K562 (cell line): ENCODE measurements at regions of chr6 and their contacts with region 1.

Region 1: DNA sequence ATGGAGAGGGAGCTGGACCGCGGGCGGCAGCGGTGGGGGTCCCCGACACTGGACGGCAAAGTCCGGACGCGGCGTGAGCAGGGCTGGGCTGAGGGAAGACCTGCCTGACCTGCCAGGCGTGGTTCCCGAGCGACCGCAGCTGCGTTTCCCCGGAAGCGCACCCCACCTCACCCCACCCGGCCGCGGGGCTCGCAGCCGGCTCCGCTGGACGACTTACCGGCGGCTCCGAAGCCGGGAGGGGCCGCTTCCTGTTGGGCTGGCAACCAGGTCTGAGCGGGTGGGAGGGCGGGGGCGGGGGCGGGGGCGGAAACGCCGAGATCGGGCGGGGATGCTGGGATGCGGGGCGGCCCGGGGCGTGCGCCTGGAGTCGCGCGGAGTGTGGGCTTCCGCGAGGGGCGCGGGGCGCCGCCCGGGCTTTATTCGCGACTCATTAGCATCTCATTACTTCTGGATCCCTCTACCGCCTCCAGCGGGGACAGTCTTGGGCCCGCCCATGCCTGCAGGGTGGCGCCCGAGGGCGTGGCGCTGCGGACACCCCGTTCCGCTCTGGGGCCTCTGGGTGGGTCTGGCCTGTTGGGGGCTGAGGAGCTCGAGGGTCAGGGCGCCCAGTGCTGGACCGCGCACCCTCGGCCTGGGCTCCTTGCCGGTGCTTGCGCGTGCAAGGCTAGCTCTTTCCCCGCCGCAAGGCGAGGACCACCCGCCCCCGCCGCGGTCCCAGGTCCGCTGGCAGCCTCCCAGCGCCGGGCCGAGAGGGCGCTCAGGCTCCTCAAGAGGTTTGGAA is at the start of gene MICAL1:
- DNase-seq: peak; percentile 87 to 89 (median 88)
- ATAC-seq: peak; percentile 96
- H3K4me3 ChIP-seq: peak within 1 kb of the TSS; percentile 63
- H3K27ac ChIP-seq: peak within 1 kb of the TSS; percentile 39
- H3K4me1 ChIP-seq: peaks cover 5 to 32% of the 10 kb centered on the region in 2 experiments; a peak in 4 of 5 replicates
- H3K27me3 ChIP-seq: no peaks in the 10 kb centered on the region
- CTCF ChIP-seq: peak; percentile 41 to 70 (median 42); a peak in 5 of 6 replicates
- EP300 ChIP-seq: no peak; the same call in 1 of the 2 replicates
- POLR2A ChIP-seq: peak; percentile 55; the same call in 1 of the 2 replicates
- RAD21 ChIP-seq: peak in 1 of 2 experiments; percentile 33; a peak in 1 of 4 replicates
- polyA plus RNA-seq, gene MICAL1: 0.07 to 0.15 TPM

Region 2: DNA sequence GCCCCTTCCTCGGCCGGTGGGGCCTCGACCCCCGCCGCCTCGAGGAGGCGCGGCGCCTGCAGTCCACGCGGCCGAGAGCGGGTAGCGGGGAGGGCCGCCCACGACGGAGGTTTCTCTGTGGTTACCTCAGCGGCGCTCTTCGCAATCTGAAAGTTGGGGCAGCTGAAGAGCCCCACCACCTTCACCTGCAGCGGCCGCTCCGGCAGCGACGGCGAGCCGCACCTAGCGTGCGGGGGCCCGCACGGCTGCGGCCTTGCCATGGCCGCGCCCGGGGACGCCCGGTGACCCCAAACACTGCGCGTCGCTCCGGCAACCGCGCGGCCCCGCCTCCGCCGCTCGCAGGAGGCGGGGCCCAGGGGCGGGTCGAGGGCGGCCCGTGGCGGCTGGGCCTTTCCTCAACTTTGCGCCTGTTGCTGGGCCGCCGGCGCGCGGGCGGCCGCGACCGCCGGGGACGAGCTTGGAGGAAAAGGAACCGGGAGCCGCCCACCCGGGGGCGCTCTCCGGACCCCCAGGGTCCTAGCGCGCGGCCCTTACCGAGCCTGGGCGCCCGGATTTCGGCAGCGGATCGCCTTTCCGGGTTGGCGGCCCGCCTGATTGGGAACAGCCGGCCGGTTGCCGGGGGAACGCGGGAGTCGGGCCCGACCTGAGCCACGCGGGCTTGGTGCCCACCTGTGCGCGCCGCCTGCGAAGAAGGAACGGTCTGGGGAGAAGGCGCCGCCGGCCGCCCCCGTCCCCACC is 15.2 kb before region 1 on chr6 and contains the starts of genes PPIL6 and SMPD2:
- CTCF ChIA-PET with region 1: no interaction called
- POLR2A ChIA-PET with region 1: interaction called, 92 read pairs
- in situ Hi-C with region 1: no loop called
- intact Hi-C with region 1: no loop called
- DNase-seq: peak; percentile 92 to 95 (median 94)
- ATAC-seq: peak; percentile 90
- H3K4me3 ChIP-seq: peak within 1 kb of the TSS; percentile 86
- H3K27ac ChIP-seq: peak within 1 kb of the TSS; percentile 74
- H3K4me1 ChIP-seq: peaks cover 13 to 27% of the 10 kb centered on the region in 2 experiments; a peak in 4 of 5 replicates
- H3K27me3 ChIP-seq: no peaks in the 10 kb centered on the region
- CTCF ChIP-seq: peak in 2 of 3 experiments; percentile 45 to 47; a peak in 4 of 6 replicates
- EP300 ChIP-seq: 0 out of 2 replicates have a peak, but pooled peaks have one; percentile 19
- POLR2A ChIP-seq: peak; percentile 75
- RAD21 ChIP-seq: no peak
- polyA plus RNA-seq, gene PPIL6: 0.13 to 0.14 TPM
- polyA plus RNA-seq, gene SMPD2: 0.13 to 1.2 TPM